GM12878 (cell line): ENCODE measurements at regions of chr15 and their contacts with region 1.

Region 1: GRCh38 chr15:27638958-27639357 is 460.2 kb downstream of the OCA2 start:
- DNase-seq: no peak
- ATAC-seq: no peak
- H3K4me3 ChIP-seq: no peak overlapping the region
- H3K27ac ChIP-seq: no peak overlapping the region
- H3K4me1 ChIP-seq: no peaks in the 10 kb centered on the region
- H3K27me3 ChIP-seq: no peaks in the 10 kb centered on the region
- CTCF ChIP-seq: no peak
- EP300 ChIP-seq: no peak
- POLR2A ChIP-seq: no peak
- RAD21 ChIP-seq: no peak

Region 2: DNA sequence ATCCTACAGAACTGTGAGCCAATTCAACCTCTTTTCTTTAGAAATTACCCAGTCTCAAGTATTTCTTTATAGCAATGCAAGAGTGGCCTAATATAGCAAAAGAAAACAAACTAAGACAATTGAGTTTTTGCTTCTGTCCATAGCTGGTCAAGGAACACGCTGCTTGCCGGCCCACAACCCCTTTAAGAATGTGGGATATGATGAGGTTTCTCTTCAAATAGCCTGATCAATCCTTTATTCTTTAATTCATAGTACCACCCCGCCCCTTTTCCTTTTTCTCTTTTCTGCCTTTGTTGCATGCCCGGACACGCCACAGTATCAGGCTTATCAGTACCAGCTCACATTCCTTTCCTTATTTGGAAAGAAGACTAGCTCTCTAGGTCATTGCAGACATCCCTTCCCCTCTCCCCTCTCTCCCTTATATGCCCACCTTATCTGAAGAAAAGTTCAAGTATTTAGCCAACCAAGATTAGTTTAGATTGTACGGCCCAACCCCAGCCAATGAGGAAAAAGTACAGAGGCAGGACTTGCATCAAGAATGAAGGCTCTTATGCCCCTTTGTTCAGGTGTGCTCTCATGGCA is 55.6 kb after region 1 on chr15:
- CTCF ChIA-PET with region 1: no interaction called
- POLR2A ChIA-PET with region 1: no interaction called
- RAD21 ChIA-PET with region 1: no interaction called
- SMC1A ChIA-PET with region 1: no interaction called
- in situ Hi-C with region 1: loop called (anchors 5 kb)
- intact Hi-C with region 1: no loop called
- DNase-seq: no peak
- ATAC-seq: no peak
- H3K4me3 ChIP-seq: no peak overlapping the region
- H3K27ac ChIP-seq: no peak overlapping the region
- H3K4me1 ChIP-seq: no peaks in the 10 kb centered on the region
- H3K27me3 ChIP-seq: no peaks in the 10 kb centered on the region
- CTCF ChIP-seq: no peak
- EP300 ChIP-seq: no peak
- POLR2A ChIP-seq: no peak
- RAD21 ChIP-seq: no peak

Region 3: DNA sequence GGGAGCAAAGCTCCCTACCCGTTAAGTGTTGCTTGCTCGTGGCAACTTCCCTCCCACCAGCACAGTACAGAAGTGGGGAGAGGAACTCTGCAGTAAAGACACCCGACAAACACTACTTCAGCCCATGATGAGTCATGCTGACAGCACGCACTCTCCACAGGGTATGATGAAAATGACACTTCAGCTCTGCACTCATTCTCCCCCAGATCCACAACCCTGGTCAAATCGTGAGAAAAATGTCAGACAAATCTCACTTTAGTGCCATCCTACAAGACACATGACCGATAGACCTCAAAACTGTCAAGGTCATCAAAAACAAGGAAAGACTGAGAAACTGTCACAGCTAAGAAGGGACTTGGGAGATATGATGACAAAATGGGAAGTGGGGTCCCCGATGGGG is 181.3 kb after region 1 on chr15:
- CTCF ChIA-PET with region 1: no interaction called
- POLR2A ChIA-PET with region 1: no interaction called
- RAD21 ChIA-PET with region 1: no interaction called
- SMC1A ChIA-PET with region 1: no interaction called
- in situ Hi-C with region 1: no loop called
- intact Hi-C with region 1: no loop called
- DNase-seq: no peak
- ATAC-seq: no peak
- H3K4me3 ChIP-seq: no peak overlapping the region
- H3K27ac ChIP-seq: no peak overlapping the region
- H3K4me1 ChIP-seq: no peaks in the 10 kb centered on the region
- H3K27me3 ChIP-seq: no peaks in the 10 kb centered on the region
- CTCF ChIP-seq: no peak
- EP300 ChIP-seq: no peak
- POLR2A ChIP-seq: no peak
- RAD21 ChIP-seq: no peak